Prostate gland (tissue), 2 donors: ENCODE measurements at regions of chr7 and their contacts with region 1.

Region 1: GRCh38 chr7:102279537-102280400 is 6.9 kb upstream of the SH2B2 start:
- DNase-seq: no peak
- H3K4me3 ChIP-seq: no peak overlapping the region
- H3K27ac ChIP-seq: no peak overlapping the region
- H3K4me1 ChIP-seq: no peaks in the 10 kb centered on the region
- H3K27me3 ChIP-seq: no peaks in the 10 kb centered on the region
- CTCF ChIP-seq: peak; percentile 48 to 87 (median 74)
- POLR2A ChIP-seq: no peak

Region 2: GRCh38 chr7:102390697-102391484 is 111.1 kb after region 1 on chr7:
- intact Hi-C with region 1: loop called (anchors 2 kb)
- DNase-seq: peak; percentile 75
- H3K4me3 ChIP-seq: no peak overlapping the region
- H3K27ac ChIP-seq: no peak overlapping the region
- H3K4me1 ChIP-seq: no peaks in the 10 kb centered on the region
- H3K27me3 ChIP-seq: no peaks in the 10 kb centered on the region
- CTCF ChIP-seq: peak; percentile 81 to 92 (median 91)
- POLR2A ChIP-seq: no peak